ENCODE measurements at regions of chr22 and their contacts with region 1.

Region 1: DNA sequence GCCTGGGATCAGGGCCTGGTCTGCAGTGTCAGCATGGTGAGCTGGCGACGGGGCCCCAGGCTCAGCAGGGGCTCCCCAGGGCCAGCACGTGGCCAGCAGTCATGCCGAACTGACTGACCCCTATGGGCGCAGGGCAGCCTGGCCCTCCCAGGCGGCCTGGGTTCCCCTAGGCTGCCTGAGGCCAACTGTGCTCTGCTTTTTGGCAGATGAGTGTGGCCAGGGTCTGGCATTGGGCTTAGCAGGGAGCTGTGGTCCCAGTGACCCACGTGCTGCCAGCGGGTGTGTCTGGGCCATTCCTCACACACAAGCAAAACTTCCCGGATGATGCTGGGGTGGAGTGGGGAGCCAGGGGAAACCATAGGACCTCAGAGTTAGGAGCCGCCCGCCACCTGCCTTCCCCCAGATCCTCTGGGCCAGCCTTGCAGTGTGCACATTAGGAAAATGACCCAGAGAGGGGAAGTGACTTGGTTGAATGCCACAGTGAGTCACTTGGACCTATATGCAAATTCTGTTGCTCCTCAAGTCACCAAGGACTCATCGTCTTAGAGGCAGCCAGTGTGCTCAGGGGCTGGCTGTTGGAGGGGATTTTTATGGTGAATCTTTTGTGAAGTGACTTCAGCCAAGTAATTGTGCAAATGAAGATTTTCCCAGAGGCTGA is 6.5 kb downstream of the ADORA2A start:
- DNase-seq: peak; percentile 90
- ATAC-seq: peak; percentile 82
- H3K4me3 ChIP-seq: peak overlapping the region; percentile 56; the same call in 1 of the 2 replicates
- H3K27ac ChIP-seq: peak overlapping the region; percentile 90
- H3K4me1 ChIP-seq: peaks cover 82% of the 10 kb centered on the region
- H3K27me3 ChIP-seq: no peaks in the 10 kb centered on the region
- CTCF ChIP-seq: no peak
- EP300 ChIP-seq: peak in 1 of 2 experiments; percentile 34; a peak in 1 of 4 replicates
- POLR2A ChIP-seq: peak; percentile 92
- RAD21 ChIP-seq: no peak

Region 2: GRCh38 chr22:24376586-24376985 is 57.4 kb before region 1 on chr22:
- CTCF ChIA-PET with region 1: no interaction called
- POLR2A ChIA-PET with region 1: no interaction called
- RAD21 ChIA-PET with region 1: no interaction called
- SMC1A ChIA-PET with region 1: no interaction called
- in situ Hi-C with region 1: no loop called
- intact Hi-C with region 1: no loop called
- DNase-seq: no peak
- ATAC-seq: no peak
- H3K4me3 ChIP-seq: no peak overlapping the region
- H3K27ac ChIP-seq: no peak overlapping the region
- H3K4me1 ChIP-seq: no peaks in the 10 kb centered on the region
- H3K27me3 ChIP-seq: no peaks in the 10 kb centered on the region
- CTCF ChIP-seq: no peak
- EP300 ChIP-seq: no peak
- POLR2A ChIP-seq: no peak
- RAD21 ChIP-seq: no peak

Region 3: DNA sequence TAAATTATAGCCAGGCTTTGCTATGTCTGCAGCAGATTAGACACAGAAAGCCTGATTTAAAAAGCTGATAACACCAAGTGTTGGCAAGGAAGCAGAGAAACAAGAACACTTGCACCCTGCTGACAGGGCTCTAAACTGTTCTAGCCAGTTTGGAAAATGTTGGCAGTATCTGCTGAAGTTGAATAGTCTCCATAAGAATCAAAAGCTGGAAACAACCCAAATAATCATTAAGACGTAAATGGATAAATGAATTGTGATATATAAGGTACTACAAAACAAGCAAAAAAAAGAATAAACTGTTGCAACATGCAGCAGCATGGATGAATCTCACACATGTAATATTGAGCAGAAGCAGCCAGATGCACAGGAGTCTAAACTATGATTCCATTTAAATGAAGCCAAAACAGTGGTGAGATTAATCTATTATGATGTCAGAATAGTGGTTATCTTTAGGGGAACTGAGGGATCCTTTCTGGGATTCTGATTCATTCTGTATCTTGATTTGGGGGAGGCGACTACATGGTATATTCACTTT is 46.9 kb before region 1 on chr22:
- CTCF ChIA-PET with region 1: no interaction called
- POLR2A ChIA-PET with region 1: interaction called, 3 read pairs
- RAD21 ChIA-PET with region 1: no interaction called
- SMC1A ChIA-PET with region 1: no interaction called
- in situ Hi-C with region 1: loop called (anchors 5 kb)
- intact Hi-C with region 1: no loop called
- DNase-seq: no peak
- ATAC-seq: no peak
- H3K4me3 ChIP-seq: no peak overlapping the region
- H3K27ac ChIP-seq: no peak overlapping the region
- H3K4me1 ChIP-seq: no peaks in the 10 kb centered on the region
- H3K27me3 ChIP-seq: no peaks in the 10 kb centered on the region
- CTCF ChIP-seq: no peak
- EP300 ChIP-seq: no peak
- POLR2A ChIP-seq: no peak
- RAD21 ChIP-seq: no peak

Region 4: GRCh38 chr22:24423519-24424000 is 10.4 kb before region 1 on chr22:
- CTCF ChIA-PET with region 1: interaction called, 31 read pairs
- POLR2A ChIA-PET with region 1: interaction called, 24 read pairs
- RAD21 ChIA-PET with region 1: interaction called, 12 read pairs
- SMC1A ChIA-PET with region 1: interaction called, 48 read pairs
- in situ Hi-C with region 1: no loop called
- intact Hi-C with region 1: no loop called
- DNase-seq: no peak
- ATAC-seq: peak; percentile 64
- H3K4me3 ChIP-seq: peak overlapping the region; percentile 77; the same call in 1 of the 2 replicates
- H3K27ac ChIP-seq: no peak overlapping the region
- H3K4me1 ChIP-seq: peaks cover 19% of the 10 kb centered on the region
- H3K27me3 ChIP-seq: no peaks in the 10 kb centered on the region
- CTCF ChIP-seq: peak; percentile 62 to 86 (median 69); a peak in 5 of 6 replicates
- EP300 ChIP-seq: no peak
- POLR2A ChIP-seq: no peak; the same call in 1 of the 2 replicates
- RAD21 ChIP-seq: peak; percentile 73

Region 5: DNA sequence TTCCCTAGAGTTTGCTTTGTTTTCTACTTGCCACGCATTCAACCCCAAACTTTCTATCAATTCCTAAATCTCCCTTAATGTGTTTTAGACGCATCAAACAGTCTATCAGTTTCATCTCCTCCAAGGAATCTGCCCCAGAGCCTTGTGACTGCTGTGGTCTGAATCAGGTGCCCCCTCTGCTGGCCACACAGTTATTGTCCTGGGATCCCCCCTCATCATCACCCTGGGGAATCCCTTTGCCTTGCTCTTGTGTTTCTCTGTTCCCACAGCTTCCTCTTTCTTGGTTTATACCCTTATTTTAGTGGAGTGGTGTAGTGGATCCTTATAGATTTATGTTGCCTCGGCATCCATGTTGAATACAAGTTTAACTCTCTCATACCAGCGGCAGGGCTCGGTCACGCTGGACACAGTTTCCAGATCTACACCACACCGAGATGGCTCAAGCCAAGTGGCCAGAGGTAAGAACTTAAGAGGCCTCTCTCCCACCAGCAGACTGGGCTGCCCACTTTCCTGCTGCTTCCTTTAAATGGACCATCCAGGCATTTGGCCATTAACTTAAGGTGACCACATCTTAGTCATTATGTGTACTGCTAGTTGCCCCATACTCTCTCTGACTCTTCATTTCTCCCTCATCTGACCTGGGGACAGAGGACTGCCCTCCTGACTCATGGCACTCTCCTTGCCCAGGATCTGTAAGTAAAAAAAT is 69.3 kb after region 1 on chr22:
- CTCF ChIA-PET with region 1: interaction called, 332 read pairs
- POLR2A ChIA-PET with region 1: interaction called, 48 read pairs
- RAD21 ChIA-PET with region 1: interaction called, 111 read pairs
- SMC1A ChIA-PET with region 1: interaction called, 122 read pairs
- in situ Hi-C with region 1: no loop called
- intact Hi-C with region 1: loop called (anchors 2 kb)
- DNase-seq: peak; percentile 85
- ATAC-seq: peak; percentile 68
- H3K4me3 ChIP-seq: peak overlapping the region; percentile 30; the same call in 1 of the 2 replicates
- H3K27ac ChIP-seq: peak overlapping the region; percentile 68
- H3K4me1 ChIP-seq: peaks cover 39% of the 10 kb centered on the region
- H3K27me3 ChIP-seq: no peaks in the 10 kb centered on the region; a peak in 1 of 4 replicates
- CTCF ChIP-seq: peak; percentile 76 to 90 (median 87)
- EP300 ChIP-seq: peak; percentile 47 to 57; a peak in 1 of 4 replicates
- POLR2A ChIP-seq: no peak
- RAD21 ChIP-seq: peak; percentile 84

Region 6: DNA sequence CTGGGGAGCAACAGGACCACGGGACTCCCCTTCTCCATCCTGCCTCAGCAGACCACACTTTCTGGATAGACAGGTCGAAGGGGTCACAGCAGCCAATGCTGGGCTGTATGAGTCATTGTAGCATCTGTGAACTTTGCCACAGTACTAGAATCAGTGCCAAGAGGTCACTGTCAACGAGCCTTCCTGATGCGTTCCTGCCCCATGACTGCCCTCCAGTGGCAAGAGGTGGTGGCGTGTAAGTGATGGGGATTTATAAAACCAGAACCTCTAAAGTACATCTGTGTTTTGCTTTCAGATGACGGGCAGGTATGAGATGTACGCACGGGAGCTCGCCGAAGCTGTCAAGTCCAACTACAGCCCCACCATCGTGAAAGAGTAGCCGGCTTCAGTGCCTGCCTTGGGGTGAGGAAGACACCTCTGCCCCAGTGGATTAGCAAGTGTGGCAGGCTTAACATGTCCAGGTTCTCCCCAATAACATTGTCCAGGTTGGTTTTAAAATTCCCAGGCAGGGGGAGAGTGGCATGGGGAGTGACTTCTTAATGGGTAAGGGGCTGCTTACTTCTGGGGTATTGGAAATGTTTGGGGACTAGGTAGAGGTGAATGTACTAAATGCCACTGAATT is 91.6 kb after region 1 on chr22:
- CTCF ChIA-PET with region 1: interaction called, 33 read pairs
- POLR2A ChIA-PET with region 1: interaction called, 4 read pairs
- RAD21 ChIA-PET with region 1: interaction called, 6 read pairs
- SMC1A ChIA-PET with region 1: interaction called, 25 read pairs
- in situ Hi-C with region 1: no loop called
- intact Hi-C with region 1: no loop called
- DNase-seq: peak; percentile 62
- ATAC-seq: peak; percentile 92
- H3K4me3 ChIP-seq: no peak overlapping the region
- H3K27ac ChIP-seq: no peak overlapping the region
- H3K4me1 ChIP-seq: peaks cover 10% of the 10 kb centered on the region
- H3K27me3 ChIP-seq: no peaks in the 10 kb centered on the region
- CTCF ChIP-seq: peak; percentile 89 to 94 (median 90)
- EP300 ChIP-seq: no peak
- POLR2A ChIP-seq: no peak
- RAD21 ChIP-seq: peak; percentile 96

Region 7: GRCh38 chr22:24601217-24602104 is 167.5 kb after region 1 on chr22:
- CTCF ChIA-PET with region 1: no interaction called
- POLR2A ChIA-PET with region 1: no interaction called
- RAD21 ChIA-PET with region 1: no interaction called
- SMC1A ChIA-PET with region 1: no interaction called
- in situ Hi-C with region 1: no loop called
- intact Hi-C with region 1: no loop called
- DNase-seq: no peak
- ATAC-seq: peak; percentile 34
- H3K4me3 ChIP-seq: no peak overlapping the region
- H3K27ac ChIP-seq: no peak overlapping the region
- H3K4me1 ChIP-seq: peaks cover 3% of the 10 kb centered on the region; the same call in 1 of the 2 replicates
- H3K27me3 ChIP-seq: no peaks in the 10 kb centered on the region
- CTCF ChIP-seq: no peak
- EP300 ChIP-seq: no peak
- POLR2A ChIP-seq: no peak
- RAD21 ChIP-seq: no peak

Region 8: GRCh38 chr22:26019596-26019995 is 1585.7 kb after region 1 on chr22:
- CTCF ChIA-PET with region 1: no interaction called
- POLR2A ChIA-PET with region 1: no interaction called
- RAD21 ChIA-PET with region 1: no interaction called
- SMC1A ChIA-PET with region 1: no interaction called
- in situ Hi-C with region 1: no loop called
- intact Hi-C with region 1: no loop called
- DNase-seq: no peak
- ATAC-seq: no peak
- H3K4me3 ChIP-seq: no peak overlapping the region
- H3K27ac ChIP-seq: no peak overlapping the region
- H3K4me1 ChIP-seq: no peaks in the 10 kb centered on the region
- H3K27me3 ChIP-seq: no peaks in the 10 kb centered on the region
- CTCF ChIP-seq: no peak
- EP300 ChIP-seq: no peak
- POLR2A ChIP-seq: no peak
- RAD21 ChIP-seq: no peak